ENCODE measurements at regions of chr3 and their contacts with region 1.

Region 1: DNA sequence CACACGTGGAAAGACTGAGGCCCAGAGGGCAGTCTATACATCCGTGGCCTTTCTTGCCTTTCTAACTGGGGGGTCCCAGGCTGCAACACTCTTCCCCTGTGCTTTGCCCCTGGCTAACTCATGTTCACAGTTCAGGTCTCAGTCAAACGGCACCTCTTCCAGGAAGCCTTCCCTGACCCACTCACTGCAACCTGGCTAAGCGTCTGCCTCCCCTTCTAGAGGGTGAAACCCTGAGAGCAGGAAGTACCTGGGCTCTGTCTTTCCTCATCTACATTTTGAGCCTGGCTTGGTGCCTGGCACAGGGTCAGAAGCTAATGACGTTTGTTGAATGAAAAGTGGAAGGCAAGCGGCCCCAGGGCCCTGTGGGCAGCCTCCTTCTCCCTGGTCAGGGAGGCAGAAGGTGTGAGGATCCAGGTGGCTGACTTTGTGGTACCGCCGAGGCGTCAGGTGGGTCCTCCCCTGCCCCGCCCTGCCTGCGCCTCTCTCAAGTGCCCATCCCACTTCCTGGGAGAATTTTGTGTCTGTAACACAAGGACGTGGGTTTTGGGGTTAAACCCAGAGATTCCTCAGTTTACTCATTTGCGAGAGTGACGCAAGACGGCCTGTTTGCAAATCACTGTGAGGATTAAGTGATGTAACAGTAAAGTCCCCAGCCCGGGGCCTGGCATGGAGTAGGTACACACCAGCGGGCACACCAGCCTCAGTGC is 32.1 kb downstream of the DNASE1L3 start:
- DNase-seq: no peak
- H3K4me3 ChIP-seq: no peak overlapping the region
- H3K27ac ChIP-seq: no peak overlapping the region
- H3K4me1 ChIP-seq: peaks cover 0 to 13% of the 10 kb centered on the region in 2 donors
- H3K27me3 ChIP-seq: no peaks in the 10 kb centered on the region
- CTCF ChIP-seq: no peak
- POLR2A ChIP-seq: no peak

Region 2: GRCh38 chr3:58073301-58074108 is 105.2 kb before region 1 on chr3:
- intact Hi-C with region 1: no loop called
- DNase-seq: no peak
- H3K4me3 ChIP-seq: no peak overlapping the region
- H3K27ac ChIP-seq: peak overlapping the region; percentile 20 to 33
- H3K4me1 ChIP-seq: no peaks in the 10 kb centered on the region
- H3K27me3 ChIP-seq: no peaks in the 10 kb centered on the region
- CTCF ChIP-seq: no peak
- POLR2A ChIP-seq: no peak

Region 3: DNA sequence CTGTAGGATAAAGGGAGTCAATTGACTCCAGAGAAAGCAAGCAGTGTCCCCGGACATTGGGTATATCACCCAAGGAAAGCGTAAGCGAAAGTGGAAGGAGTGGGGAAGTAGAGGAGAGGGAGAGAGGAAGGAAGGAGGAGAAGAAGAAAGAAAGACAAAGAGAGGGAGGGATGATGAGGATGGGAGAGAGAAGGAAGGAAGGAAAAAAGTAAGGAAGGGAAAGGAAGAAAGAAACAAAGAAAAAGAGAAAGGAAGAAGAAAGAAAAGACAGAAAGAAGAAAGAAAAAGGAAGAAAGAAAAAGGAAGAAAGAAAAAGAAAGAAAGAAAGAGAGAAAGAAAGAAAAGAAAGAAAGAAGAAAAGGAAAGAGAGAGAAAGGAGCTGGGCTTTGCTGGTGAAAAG is 31.3 kb after region 1 on chr3:
- intact Hi-C with region 1: loop called (anchors 1 kb)
- DNase-seq: no peak
- H3K4me3 ChIP-seq: no peak overlapping the region
- H3K27ac ChIP-seq: no peak overlapping the region
- H3K4me1 ChIP-seq: no peaks in the 10 kb centered on the region
- H3K27me3 ChIP-seq: no peaks in the 10 kb centered on the region
- CTCF ChIP-seq: no peak
- POLR2A ChIP-seq: no peak